Ovary (tissue), 10 donors: ENCODE measurements at regions of chr3 and their contacts with region 1.

Region 1: DNA sequence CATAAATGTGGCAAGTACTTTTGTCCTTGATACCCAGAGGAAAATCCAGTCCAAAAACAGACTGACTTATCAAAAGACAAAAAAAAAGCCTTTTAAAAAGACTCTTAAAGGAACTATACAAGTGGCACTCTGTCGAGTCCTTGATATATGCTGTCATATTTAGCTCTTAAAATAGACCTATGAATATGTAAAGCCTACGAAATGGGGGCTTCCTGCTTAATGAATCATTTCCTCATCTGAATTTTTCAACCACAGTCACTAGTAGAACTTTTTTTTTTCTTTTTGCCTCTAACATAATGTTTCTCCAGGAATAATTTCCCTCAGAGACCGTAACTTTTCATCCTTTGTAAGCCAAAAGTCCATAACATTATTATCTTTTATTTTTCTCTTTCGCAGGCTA is 95.8 kb downstream of the P3H2 start:
- DNase-seq: no peak
- H3K4me3 ChIP-seq: no peak overlapping the region
- H3K27ac ChIP-seq: no peak overlapping the region
- H3K4me1 ChIP-seq: peaks cover 3% of the 10 kb centered on the region
- H3K27me3 ChIP-seq: no peaks in the 10 kb centered on the region
- CTCF ChIP-seq: no peak
- EP300 ChIP-seq: no peak
- POLR2A ChIP-seq: no peak

Region 2: GRCh38 chr3:189304446-189305351 is 720.2 kb before region 1 on chr3:
- intact Hi-C with region 1: loop called in 1 of 4 experiments (anchors 5 kb)
- DNase-seq: no peak
- H3K4me3 ChIP-seq: no peak overlapping the region
- H3K27ac ChIP-seq: no peak overlapping the region
- H3K4me1 ChIP-seq: no peaks in the 10 kb centered on the region
- H3K27me3 ChIP-seq: no peaks in the 10 kb centered on the region
- CTCF ChIP-seq: no peak
- EP300 ChIP-seq: no peak
- POLR2A ChIP-seq: no peak

Region 3: DNA sequence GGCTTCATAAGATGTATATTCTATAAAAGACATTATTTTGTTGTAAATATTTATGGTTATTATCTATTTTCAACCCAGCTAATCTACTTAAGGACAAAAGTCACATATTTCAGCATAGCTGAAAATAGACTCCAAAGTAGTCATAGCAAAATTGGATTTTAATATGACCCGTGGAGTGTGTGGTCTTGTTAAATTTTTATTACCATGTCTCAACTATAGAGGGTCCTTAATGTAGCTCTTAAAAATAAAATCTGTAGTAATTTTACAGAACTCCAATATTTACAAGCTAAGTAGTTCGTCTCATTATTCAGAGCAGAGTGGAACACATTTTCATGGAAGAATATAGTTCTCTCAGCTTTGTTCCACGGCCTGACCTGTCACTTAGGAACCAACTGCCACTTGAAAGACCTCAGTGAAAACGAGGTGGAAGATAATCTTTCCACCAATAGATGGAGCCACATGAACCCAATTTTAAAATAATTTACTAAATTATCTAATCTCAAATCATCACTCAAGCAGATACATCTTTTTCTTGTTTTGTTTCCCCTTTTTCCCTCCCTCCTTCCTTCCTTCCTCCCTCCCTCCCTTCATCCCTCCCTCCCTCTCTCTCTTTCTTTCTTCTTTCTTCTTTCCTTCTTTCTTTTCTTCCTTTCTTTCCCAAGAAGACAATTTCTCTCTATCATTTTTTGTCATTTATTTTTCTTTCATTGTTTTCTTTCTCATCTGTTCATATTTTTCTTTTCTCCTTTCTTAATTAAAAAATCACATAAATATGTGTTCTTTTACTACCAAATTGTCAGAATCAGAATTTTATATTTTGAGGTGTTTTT is 200.2 kb after region 1 on chr3:
- intact Hi-C with region 1: no loop called
- DNase-seq: no peak
- H3K4me3 ChIP-seq: no peak overlapping the region
- H3K27ac ChIP-seq: no peak overlapping the region
- H3K4me1 ChIP-seq: no peaks in the 10 kb centered on the region
- H3K27me3 ChIP-seq: no peaks in the 10 kb centered on the region
- CTCF ChIP-seq: peak in 2 of 3 donors; percentile 29 to 39
- EP300 ChIP-seq: no peak
- POLR2A ChIP-seq: no peak